H1 (cell line): ENCODE measurements at regions of chr13 and their contacts with region 1.

Region 1: DNA sequence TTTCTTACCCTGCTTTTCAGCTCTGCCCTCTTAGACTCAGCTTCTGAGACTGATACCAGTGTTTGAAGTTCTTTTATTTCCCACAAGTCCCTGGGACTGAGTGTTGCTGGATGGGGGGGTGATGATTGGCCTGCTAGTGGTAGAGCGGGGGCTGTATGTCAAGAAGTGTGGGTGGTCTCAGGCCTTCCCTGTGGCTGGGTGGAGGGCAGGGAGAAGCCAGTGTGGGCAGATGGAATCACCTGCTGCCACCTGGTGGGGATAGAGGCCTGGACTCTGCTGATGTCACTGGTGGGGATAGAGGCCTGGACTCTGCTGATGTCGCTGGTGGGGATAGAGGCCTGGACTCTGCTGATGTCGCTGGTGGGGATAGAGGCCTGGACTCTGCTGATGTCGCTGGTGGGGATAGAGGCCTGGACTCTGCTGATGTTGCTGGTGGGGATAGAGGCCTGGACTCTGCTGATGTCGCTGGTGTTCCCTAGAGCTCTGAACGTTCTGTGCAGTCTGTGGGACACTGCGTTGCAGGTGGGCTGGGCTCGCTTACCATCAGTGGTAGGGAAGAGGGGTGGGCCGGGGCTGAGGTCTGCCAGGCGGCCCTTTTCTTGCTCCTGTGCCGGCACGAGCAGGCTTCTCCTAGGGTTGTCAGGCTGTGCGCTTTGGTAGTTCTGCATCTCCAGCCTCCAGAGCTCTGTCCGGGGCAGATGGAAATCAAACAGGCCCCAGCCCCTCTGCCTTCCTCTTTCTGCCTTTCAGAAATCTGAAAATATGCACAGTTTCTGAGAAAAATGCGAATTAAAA is 101.3 kb downstream of the ARHGEF7 start:
- DNase-seq: peak in 1 of 2 experiments; percentile 72
- H3K4me3 ChIP-seq: peak overlapping the region in 1 of 4 experiments; percentile 35; a peak in 1 of 8 replicates
- H3K27ac ChIP-seq: no peak overlapping the region
- H3K4me1 ChIP-seq: peaks cover 23 to 47% (median 35%) of the 10 kb centered on the region in 4 experiments
- H3K27me3 ChIP-seq: no peaks in the 10 kb centered on the region
- CTCF ChIP-seq: peak; percentile 58 to 76 (median 62)
- EP300 ChIP-seq: no peak
- POLR2A ChIP-seq: no peak
- RAD21 ChIP-seq: peak; percentile 65 to 71

Region 2: GRCh38 chr13:111184458-111185401 is 31.6 kb before region 1 on chr13:
- CTCF ChIA-PET with region 1: interaction called, 65 read pairs
- POLR2A ChIA-PET with region 1: interaction called, 4 read pairs
- DNase-seq: no peak
- H3K4me3 ChIP-seq: no peak overlapping the region
- H3K27ac ChIP-seq: no peak overlapping the region
- H3K4me1 ChIP-seq: peaks cover 0 to 13% (median 4%) of the 10 kb centered on the region in 4 experiments; a peak in 4 of 7 replicates
- H3K27me3 ChIP-seq: no peaks in the 10 kb centered on the region
- CTCF ChIP-seq: no peak
- EP300 ChIP-seq: no peak
- POLR2A ChIP-seq: no peak
- RAD21 ChIP-seq: no peak

Region 3: GRCh38 chr13:111202745-111203144 is 13.6 kb before region 1 on chr13:
- CTCF ChIA-PET with region 1: interaction called, 15 read pairs
- POLR2A ChIA-PET with region 1: interaction called, 4 read pairs
- DNase-seq: no peak
- H3K4me3 ChIP-seq: no peak overlapping the region
- H3K27ac ChIP-seq: no peak overlapping the region
- H3K4me1 ChIP-seq: peaks cover 0 to 20% (median 16%) of the 10 kb centered on the region in 4 experiments; a peak in 6 of 7 replicates
- H3K27me3 ChIP-seq: no peaks in the 10 kb centered on the region
- CTCF ChIP-seq: no peak
- EP300 ChIP-seq: no peak
- POLR2A ChIP-seq: no peak
- RAD21 ChIP-seq: no peak

Region 4: GRCh38 chr13:111296417-111296816 is 80.1 kb after region 1 on chr13:
- CTCF ChIA-PET with region 1: no interaction called
- POLR2A ChIA-PET with region 1: no interaction called
- DNase-seq: no peak
- H3K4me3 ChIP-seq: no peak overlapping the region
- H3K27ac ChIP-seq: no peak overlapping the region
- H3K4me1 ChIP-seq: no peaks in the 10 kb centered on the region
- H3K27me3 ChIP-seq: no peaks in the 10 kb centered on the region
- CTCF ChIP-seq: no peak
- EP300 ChIP-seq: no peak
- POLR2A ChIP-seq: no peak
- RAD21 ChIP-seq: no peak